H1 (cell line): ENCODE measurements at regions of chr11 and their contacts with region 1.

Region 1: DNA sequence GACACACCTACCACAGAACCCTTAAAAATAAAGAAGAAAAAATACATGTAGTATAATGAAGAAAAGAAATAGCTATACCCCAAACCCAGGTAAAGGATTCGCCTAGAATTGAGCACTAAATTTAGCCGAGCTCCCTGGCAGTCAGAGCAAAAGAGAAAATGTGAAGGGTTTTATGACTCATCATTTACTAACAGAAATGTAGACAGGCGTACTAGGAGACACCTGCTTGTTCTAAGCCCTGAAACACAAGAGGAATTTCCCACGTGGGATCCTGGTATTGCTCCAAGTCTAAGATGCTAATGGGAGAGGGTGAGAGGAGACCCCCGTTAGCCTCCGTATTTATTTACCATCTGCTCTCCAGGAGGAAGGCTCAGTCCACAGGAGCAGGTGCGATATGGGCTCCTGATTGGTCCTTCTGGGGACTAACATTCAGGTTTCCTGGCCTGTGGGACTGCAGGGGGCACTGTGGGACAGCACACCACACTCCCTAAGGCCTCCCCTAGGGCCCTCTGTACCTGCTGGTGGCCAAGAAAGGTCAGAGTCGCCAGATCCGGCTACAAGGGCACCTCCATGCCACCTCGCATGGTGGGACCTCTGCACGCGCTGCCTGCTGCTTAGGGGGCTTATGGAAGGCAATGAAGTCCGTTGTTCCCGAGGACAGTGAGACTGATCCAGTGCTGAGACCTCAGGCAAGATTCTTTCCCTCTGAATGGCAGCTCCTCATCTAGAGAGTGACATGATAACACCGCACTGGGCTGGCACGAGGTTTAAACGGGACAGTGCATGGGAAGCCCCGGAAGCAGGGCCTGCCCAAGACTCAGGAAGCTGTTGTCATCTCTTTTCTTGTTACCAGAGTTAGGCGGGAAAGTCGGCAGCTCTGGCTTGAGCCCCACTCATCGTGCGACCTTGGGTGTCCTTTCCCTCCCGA is 25.8 kb downstream of the KCNC1 start:
- DNase-seq: peak; percentile 77 to 84
- H3K4me3 ChIP-seq: no peak overlapping the region
- H3K27ac ChIP-seq: no peak overlapping the region
- H3K4me1 ChIP-seq: peaks cover 0 to 7% (median 1%) of the 10 kb centered on the region in 4 experiments; a peak in 3 of 7 replicates
- H3K27me3 ChIP-seq: no peaks in the 10 kb centered on the region
- CTCF ChIP-seq: peak; percentile 89 to 97 (median 91)
- EP300 ChIP-seq: no peak
- POLR2A ChIP-seq: no peak
- RAD21 ChIP-seq: peak; percentile 95 to 96

Region 2: GRCh38 chr11:17738151-17738973 is 22.0 kb before region 1 on chr11:
- CTCF ChIA-PET with region 1: interaction called, 82 read pairs
- POLR2A ChIA-PET with region 1: interaction called, 3 read pairs
- DNase-seq: no peak
- H3K4me3 ChIP-seq: peak overlapping the region in 3 of 4 experiments; percentile 14 to 38 (median 16); a peak in 3 of 8 replicates
- H3K27ac ChIP-seq: no peak overlapping the region
- H3K4me1 ChIP-seq: peaks cover 3 to 30% (median 13%) of the 10 kb centered on the region in 4 experiments
- H3K27me3 ChIP-seq: peaks cover 22 to 52% (median 50%) of the 10 kb centered on the region in 4 experiments
- CTCF ChIP-seq: no peak
- EP300 ChIP-seq: no peak
- POLR2A ChIP-seq: no peak
- RAD21 ChIP-seq: no peak

Region 3: DNA sequence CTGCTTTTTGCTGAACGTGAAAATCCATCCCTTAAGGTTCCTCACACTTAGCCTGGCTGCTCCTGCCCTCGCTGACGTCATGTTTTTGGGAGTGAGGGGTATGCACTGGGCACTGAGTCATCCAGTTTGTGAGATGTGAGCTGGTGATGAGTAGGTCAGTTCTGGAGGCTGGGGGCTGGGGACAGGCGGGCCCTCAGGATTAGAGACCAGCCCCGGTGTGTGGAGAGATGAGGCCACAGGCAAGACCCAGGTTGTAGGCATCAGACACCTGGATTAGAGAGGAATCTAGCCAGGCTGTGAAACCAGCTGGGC is 16.6 kb before region 1 on chr11:
- CTCF ChIA-PET with region 1: interaction called, 49 read pairs
- POLR2A ChIA-PET with region 1: no interaction called
- DNase-seq: no peak
- H3K4me3 ChIP-seq: no peak overlapping the region
- H3K27ac ChIP-seq: no peak overlapping the region
- H3K4me1 ChIP-seq: peaks cover 0 to 7% (median 3%) of the 10 kb centered on the region in 4 experiments; a peak in 6 of 7 replicates
- H3K27me3 ChIP-seq: peaks cover 0 to 6% (median 2%) of the 10 kb centered on the region in 4 experiments; a peak in 5 of 7 replicates
- CTCF ChIP-seq: no peak
- EP300 ChIP-seq: no peak
- POLR2A ChIP-seq: no peak
- RAD21 ChIP-seq: no peak

Region 4: DNA sequence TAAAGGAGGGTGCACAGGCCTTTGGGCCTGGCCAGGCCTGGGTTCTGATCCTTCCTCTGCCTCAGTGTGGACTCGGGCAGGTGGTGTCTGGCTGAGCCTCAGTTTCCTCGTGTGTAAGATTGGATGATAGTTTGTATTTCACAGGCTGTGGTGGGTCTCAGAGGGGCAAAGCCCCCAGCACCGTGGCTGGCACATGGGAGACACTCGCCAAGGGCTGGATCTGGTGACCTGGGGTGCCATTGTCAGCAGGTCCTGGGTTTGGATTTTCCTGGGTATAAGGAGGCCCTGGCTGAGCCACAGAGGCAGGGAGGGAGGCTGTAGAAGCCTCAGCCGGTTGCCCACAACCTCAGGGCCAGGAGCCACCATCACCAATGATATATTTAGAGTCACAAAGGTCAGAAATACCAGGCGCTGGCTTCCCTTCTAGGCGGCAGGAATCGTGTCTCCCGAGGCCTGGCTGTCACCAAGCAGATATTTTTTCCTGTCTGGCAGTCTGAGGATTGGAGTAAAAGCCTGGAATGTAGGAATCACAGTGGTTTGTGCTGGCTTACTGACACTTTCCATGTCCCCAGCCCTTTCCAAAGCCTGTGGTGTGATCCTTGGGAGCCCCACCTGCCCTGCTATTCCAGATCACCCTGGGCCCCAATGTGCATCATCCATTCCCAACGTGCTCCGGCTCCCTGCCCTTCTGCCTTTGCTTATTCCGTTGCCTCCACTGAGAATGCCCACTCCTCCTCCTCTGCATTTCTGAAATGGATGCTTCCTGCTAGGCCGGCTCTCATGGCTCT is 10.2 kb before region 1 on chr11:
- CTCF ChIA-PET with region 1: interaction called, 49 read pairs
- POLR2A ChIA-PET with region 1: no interaction called
- DNase-seq: no peak
- H3K4me3 ChIP-seq: no peak overlapping the region
- H3K27ac ChIP-seq: no peak overlapping the region
- H3K4me1 ChIP-seq: no peaks in the 10 kb centered on the region
- H3K27me3 ChIP-seq: no peaks in the 10 kb centered on the region
- CTCF ChIP-seq: no peak
- EP300 ChIP-seq: no peak
- POLR2A ChIP-seq: no peak
- RAD21 ChIP-seq: no peak

Region 5: DNA sequence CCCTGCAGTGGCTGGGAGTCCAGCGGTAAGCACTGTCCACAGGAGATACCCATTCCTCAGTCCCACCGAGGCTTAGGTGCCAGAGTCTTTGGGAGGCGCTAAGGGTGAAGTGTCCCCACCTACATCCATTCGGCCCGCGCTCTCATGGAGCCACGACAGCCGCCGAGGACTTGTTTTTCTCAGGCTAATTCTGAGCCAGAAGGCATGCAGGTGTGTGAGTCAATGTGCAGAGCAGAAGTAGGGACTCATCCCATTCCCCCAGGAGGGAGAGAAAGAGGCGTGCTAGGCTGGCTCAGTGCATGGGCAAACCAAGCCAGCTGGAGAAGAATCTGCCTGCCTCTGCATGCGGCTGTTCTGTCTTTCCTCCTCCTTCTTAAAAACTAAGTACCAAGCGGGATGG is 20.9 kb after region 1 on chr11:
- CTCF ChIA-PET with region 1: interaction called, 14 read pairs
- POLR2A ChIA-PET with region 1: no interaction called
- DNase-seq: no peak
- H3K4me3 ChIP-seq: no peak overlapping the region
- H3K27ac ChIP-seq: no peak overlapping the region
- H3K4me1 ChIP-seq: no peaks in the 10 kb centered on the region
- H3K27me3 ChIP-seq: no peaks in the 10 kb centered on the region
- CTCF ChIP-seq: no peak
- EP300 ChIP-seq: no peak
- POLR2A ChIP-seq: no peak
- RAD21 ChIP-seq: no peak

Region 6: DNA sequence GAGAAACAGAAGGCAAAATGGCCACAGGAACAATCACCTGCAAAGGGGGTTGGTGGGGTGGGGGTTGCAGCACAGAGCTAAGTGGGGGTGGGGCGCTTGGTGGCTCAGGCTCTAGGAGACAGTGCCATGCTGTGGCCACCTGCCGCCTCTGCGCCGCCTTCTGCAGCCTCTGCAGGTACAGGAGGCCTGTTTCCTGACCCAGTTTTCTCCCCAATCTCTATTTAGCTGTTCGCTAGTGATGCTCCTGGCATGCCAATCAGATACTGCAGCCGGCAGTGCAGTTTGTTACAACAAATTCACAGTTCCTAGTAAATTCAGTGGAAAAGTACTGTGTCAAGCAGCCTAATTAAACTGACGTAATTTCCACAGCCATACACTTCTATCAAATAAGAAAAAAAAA is 146.1 kb after region 1 on chr11:
- CTCF ChIA-PET with region 1: interaction called, 48 read pairs
- POLR2A ChIA-PET with region 1: no interaction called
- DNase-seq: peak; percentile 70 to 73
- H3K4me3 ChIP-seq: peak overlapping the region in 1 of 4 experiments; percentile 20; a peak in 1 of 8 replicates
- H3K27ac ChIP-seq: no peak overlapping the region
- H3K4me1 ChIP-seq: peaks cover 4 to 10% (median 6%) of the 10 kb centered on the region in 4 experiments; a peak in 6 of 7 replicates
- H3K27me3 ChIP-seq: no peaks in the 10 kb centered on the region
- CTCF ChIP-seq: peak; percentile 62 to 86 (median 67)
- EP300 ChIP-seq: no peak
- POLR2A ChIP-seq: no peak
- RAD21 ChIP-seq: peak; percentile 74 to 79

Region 7: DNA sequence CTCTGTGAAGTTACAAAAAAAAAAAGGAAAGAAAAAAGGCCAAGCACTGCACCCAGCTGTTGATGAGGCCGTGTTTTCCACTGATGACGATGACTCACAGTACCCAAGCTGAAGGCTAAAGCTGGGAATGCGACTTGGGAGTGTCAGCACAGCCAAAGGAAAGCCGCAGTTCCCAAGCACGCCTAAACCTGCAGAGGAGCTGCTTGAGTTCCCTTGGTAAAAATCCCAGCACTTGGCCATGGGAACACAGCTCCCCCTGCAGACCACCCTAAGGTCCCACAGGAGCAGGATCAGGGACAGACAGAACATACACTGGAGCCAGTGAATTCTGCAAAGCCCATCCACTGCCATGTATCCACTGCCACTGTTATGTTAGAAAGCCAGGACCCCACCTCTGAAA is 212.6 kb after region 1 on chr11:
- CTCF ChIA-PET with region 1: interaction called, 76 read pairs
- POLR2A ChIA-PET with region 1: no interaction called
- DNase-seq: peak; percentile 77 to 83
- H3K4me3 ChIP-seq: no peak overlapping the region
- H3K27ac ChIP-seq: no peak overlapping the region
- H3K4me1 ChIP-seq: no peaks in the 10 kb centered on the region
- H3K27me3 ChIP-seq: no peaks in the 10 kb centered on the region
- CTCF ChIP-seq: peak; percentile 91 to 98 (median 97)
- EP300 ChIP-seq: no peak
- POLR2A ChIP-seq: no peak
- RAD21 ChIP-seq: peak; percentile 91 to 93